ENCODE measurements at regions of chr3 and their contacts with region 1.

Region 1: GRCh38 chr3:18559331-18559842 is 134.2 kb upstream of the SATB1 start:
- DNase-seq: peak; percentile 27
- H3K4me3 ChIP-seq: no peak overlapping the region
- H3K27ac ChIP-seq: no peak overlapping the region
- H3K4me1 ChIP-seq: no peaks in the 10 kb centered on the region
- H3K27me3 ChIP-seq: no peaks in the 10 kb centered on the region
- CTCF ChIP-seq: peak in 2 of 3 experiments; percentile 64 to 65
- POLR2A ChIP-seq: no peak

Region 2: DNA sequence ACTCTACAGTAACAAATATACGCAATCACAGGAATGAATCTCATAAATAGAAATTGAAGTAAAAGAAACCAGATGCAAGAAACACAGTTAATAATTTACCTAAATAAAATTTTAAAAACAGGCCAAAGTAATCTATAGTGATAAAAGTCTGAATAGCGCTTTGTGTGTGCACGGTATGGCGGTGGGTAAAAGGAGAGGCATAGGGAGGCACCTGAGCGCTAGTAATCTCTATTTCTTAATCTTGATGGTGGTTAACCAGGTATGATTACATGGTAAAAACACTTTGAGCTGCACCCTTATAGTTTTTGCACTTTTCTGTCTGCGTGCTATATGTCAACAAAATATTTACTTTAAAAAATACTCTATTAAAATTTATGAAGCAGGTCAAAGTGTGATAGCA is 63.8 kb after region 1 on chr3:
- intact Hi-C with region 1: no loop called
- DNase-seq: no peak
- H3K4me3 ChIP-seq: no peak overlapping the region
- H3K27ac ChIP-seq: no peak overlapping the region
- H3K4me1 ChIP-seq: no peaks in the 10 kb centered on the region
- H3K27me3 ChIP-seq: no peaks in the 10 kb centered on the region
- CTCF ChIP-seq: no peak
- POLR2A ChIP-seq: no peak

Region 3: GRCh38 chr3:19688767-19689166 is 1129.4 kb after region 1 on chr3:
- intact Hi-C with region 1: loop called (anchors 5 kb)
- DNase-seq: no peak
- H3K4me3 ChIP-seq: no peak overlapping the region
- H3K27ac ChIP-seq: no peak overlapping the region
- H3K4me1 ChIP-seq: no peaks in the 10 kb centered on the region
- H3K27me3 ChIP-seq: no peaks in the 10 kb centered on the region
- CTCF ChIP-seq: no peak
- POLR2A ChIP-seq: no peak

Measured in testis (tissue), 5 donors.